Naive thymus-derived CD4-positive, alpha-beta T cell (primary cell): ENCODE measurements at regions of chr3 and their contacts with region 1.

Region 1: DNA sequence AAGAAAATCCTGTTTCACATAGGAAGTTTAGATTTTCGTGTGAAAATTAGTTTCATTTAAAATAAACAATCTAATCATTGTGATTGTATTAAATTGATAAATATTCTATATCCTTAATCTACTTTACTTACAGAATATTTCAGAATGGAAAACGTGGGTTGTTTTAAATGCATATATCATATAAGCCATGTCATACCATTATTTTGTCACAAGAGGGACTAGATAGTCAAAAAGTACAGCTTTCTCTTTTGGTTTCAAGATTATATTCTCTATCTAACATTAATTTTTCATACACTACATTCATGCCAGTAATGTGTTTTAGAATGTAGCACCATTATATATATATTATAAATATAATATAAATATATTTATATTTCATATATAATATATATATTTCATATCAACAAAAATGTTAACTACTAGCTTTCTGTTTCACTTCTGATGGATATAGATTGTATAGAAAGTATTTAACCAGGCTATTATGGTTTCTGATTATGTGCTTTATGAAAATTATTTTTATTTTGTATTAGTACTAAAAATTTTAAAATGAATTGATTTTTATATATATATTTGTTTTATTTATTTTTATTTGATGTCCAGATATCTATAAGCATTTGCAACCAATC is 45.3 kb downstream of the OSTN start:
- DNase-seq: no peak
- ATAC-seq: no peak
- H3K4me3 ChIP-seq: no peak overlapping the region
- H3K4me3 Mint-ChIP-seq: no peak overlapping the region
- H3K27ac ChIP-seq: no peak overlapping the region
- H3K27ac Mint-ChIP-seq: no peak overlapping the region
- H3K4me1 ChIP-seq: no peaks in the 10 kb centered on the region
- H3K4me1 Mint-ChIP-seq: peaks cover 0 to 5% (median 0%) of the 10 kb centered on the region in 7 donors
- H3K27me3 ChIP-seq: no peaks in the 10 kb centered on the region
- H3K27me3 Mint-ChIP-seq: no peaks in the 10 kb centered on the region

Region 2: DNA sequence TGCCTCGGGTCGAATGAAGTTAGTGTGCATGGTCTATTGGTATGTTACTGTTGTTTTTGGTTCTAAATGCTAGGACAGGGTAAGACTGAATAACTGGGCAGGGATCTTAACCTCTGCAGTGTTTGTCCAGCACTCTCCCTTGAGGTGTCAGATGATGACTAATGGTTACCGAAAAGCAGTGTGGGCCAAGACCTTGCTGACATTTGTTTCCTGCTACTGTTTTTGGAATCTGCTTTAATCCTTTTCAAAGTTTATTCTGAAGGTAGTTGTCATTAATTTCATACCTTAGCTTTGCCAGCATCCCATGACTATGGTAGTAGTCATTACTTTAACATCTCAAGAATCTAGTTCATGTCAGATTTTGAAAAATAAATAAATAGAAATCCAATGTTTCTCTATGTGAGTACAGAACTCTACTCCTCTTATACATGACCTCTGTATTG is 1240.7 kb before region 1 on chr3:
- CTCF ChIA-PET with region 1: no interaction called
- POLR2A ChIA-PET with region 1: no interaction called
- intact Hi-C with region 1: no loop called
- DNase-seq: no peak
- ATAC-seq: no peak
- H3K4me3 ChIP-seq: no peak overlapping the region
- H3K4me3 Mint-ChIP-seq: no peak overlapping the region
- H3K27ac ChIP-seq: no peak overlapping the region
- H3K27ac Mint-ChIP-seq: no peak overlapping the region
- H3K4me1 ChIP-seq: no peaks in the 10 kb centered on the region
- H3K4me1 Mint-ChIP-seq: no peaks in the 10 kb centered on the region
- H3K27me3 ChIP-seq: no peaks in the 10 kb centered on the region
- H3K27me3 Mint-ChIP-seq: peaks cover 16 to 28% (median 18%) of the 10 kb centered on the region in 5 donors

Region 3: DNA sequence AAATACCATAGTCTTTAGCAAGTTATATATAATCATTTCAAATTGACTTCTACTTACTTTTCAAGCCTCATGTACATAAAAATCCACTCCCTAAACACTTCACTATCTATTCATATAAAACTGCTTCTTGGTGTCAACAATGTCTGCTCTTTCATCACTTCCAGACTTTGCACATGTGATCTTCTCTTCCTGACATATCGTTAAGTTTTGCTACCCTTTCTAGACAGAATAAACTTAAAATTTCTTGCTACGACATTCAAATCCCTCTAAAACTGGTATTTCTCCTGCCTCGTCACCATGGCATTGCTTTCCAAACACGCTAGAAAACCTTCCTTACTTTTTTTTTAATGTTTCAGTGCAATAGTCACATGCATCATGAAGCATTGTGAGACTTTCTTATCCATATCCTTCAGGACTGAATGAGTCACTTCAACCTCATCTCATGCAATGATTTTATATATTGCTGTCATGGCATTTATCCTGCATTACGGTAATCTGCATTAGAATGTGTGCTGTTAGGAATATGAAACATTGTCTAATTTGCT is 504.6 kb before region 1 on chr3:
- CTCF ChIA-PET with region 1: no interaction called
- POLR2A ChIA-PET with region 1: no interaction called
- intact Hi-C with region 1: no loop called
- DNase-seq: no peak
- ATAC-seq: no peak
- H3K4me3 ChIP-seq: no peak overlapping the region
- H3K4me3 Mint-ChIP-seq: no peak overlapping the region
- H3K27ac ChIP-seq: no peak overlapping the region
- H3K27ac Mint-ChIP-seq: no peak overlapping the region
- H3K4me1 ChIP-seq: no peaks in the 10 kb centered on the region
- H3K4me1 Mint-ChIP-seq: no peaks in the 10 kb centered on the region
- H3K27me3 ChIP-seq: no peaks in the 10 kb centered on the region
- H3K27me3 Mint-ChIP-seq: peaks cover 6 to 16% (median 10%) of the 10 kb centered on the region in 5 donors

Region 4: GRCh38 chr3:191388823-191389222 is 144.5 kb after region 1 on chr3:
- CTCF ChIA-PET with region 1: no interaction called
- POLR2A ChIA-PET with region 1: no interaction called
- intact Hi-C with region 1: loop called in 1 of 2 experiments (anchors 2 kb)
- DNase-seq: no peak
- ATAC-seq: no peak
- H3K4me3 ChIP-seq: no peak overlapping the region
- H3K4me3 Mint-ChIP-seq: no peak overlapping the region
- H3K27ac ChIP-seq: no peak overlapping the region
- H3K27ac Mint-ChIP-seq: no peak overlapping the region
- H3K4me1 ChIP-seq: no peaks in the 10 kb centered on the region
- H3K4me1 Mint-ChIP-seq: no peaks in the 10 kb centered on the region
- H3K27me3 ChIP-seq: no peaks in the 10 kb centered on the region
- H3K27me3 Mint-ChIP-seq: no peaks in the 10 kb centered on the region

Region 5: GRCh38 chr3:191455257-191455952 is 211.1 kb after region 1 on chr3:
- CTCF ChIA-PET with region 1: no interaction called
- POLR2A ChIA-PET with region 1: no interaction called
- intact Hi-C with region 1: no loop called
- DNase-seq: no peak
- ATAC-seq: no peak
- H3K4me3 ChIP-seq: no peak overlapping the region
- H3K4me3 Mint-ChIP-seq: no peak overlapping the region
- H3K27ac ChIP-seq: no peak overlapping the region
- H3K27ac Mint-ChIP-seq: no peak overlapping the region
- H3K4me1 ChIP-seq: no peaks in the 10 kb centered on the region
- H3K4me1 Mint-ChIP-seq: no peaks in the 10 kb centered on the region
- H3K27me3 ChIP-seq: no peaks in the 10 kb centered on the region
- H3K27me3 Mint-ChIP-seq: no peaks in the 10 kb centered on the region

Region 6: DNA sequence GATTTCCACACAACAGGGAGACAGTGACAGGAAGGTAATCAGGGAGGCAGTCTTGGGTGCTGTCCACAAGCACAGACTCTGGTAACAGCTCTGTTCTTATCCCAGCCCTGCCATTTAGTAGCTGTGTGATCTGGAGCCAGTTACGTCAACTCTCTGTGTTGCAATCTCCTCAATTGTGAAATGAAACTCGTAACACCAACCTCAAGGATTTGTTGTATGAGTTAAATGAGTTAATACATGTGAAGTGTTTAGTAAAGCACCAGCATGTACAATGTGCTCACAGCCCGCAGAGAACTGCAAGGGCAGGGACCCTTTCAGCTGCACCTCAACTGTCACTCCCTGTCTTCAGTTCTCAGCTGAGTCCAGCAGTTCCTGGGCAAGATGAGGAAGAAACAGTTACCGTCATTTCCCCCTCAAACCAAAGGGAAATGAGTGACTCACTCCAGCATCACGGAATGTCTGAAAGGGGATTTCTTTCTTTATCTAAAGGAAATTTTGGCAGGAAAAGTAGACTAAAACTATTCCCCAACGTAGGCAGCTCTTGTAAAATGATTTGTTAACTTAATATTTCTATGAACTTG is 1713.2 kb after region 1 on chr3:
- CTCF ChIA-PET with region 1: no interaction called
- POLR2A ChIA-PET with region 1: no interaction called
- intact Hi-C with region 1: no loop called
- DNase-seq: peak in 1 of 9 donors; percentile 34
- ATAC-seq: peak; percentile 87
- H3K4me3 ChIP-seq: no peak overlapping the region
- H3K4me3 Mint-ChIP-seq: peak overlapping the region in 1 of 10 donors; percentile 66
- H3K27ac ChIP-seq: no peak overlapping the region
- H3K27ac Mint-ChIP-seq: peak overlapping the region in 1 of 9 donors; percentile 75
- H3K4me1 ChIP-seq: no peaks in the 10 kb centered on the region
- H3K4me1 Mint-ChIP-seq: peaks cover 0 to 21% (median 0%) of the 10 kb centered on the region in 7 donors
- H3K27me3 ChIP-seq: no peaks in the 10 kb centered on the region
- H3K27me3 Mint-ChIP-seq: peaks cover 0 to 6% (median 0%) of the 10 kb centered on the region in 5 donors